ENCODE measurements at regions of chr11 and their contacts with region 1.

Region 1: GRCh38 chr11:17063171-17064002 is 14.1 kb downstream of the RPS13 start:
- DNase-seq: peak; percentile 35 to 70 (median 63)
- H3K4me3 ChIP-seq: no peak overlapping the region
- H3K27ac ChIP-seq: no peak overlapping the region
- H3K4me1 ChIP-seq: no peaks in the 10 kb centered on the region
- H3K27me3 ChIP-seq: no peaks in the 10 kb centered on the region
- CTCF ChIP-seq: peak in 2 of 3 donors; percentile 39 to 40
- EP300 ChIP-seq: no peak
- POLR2A ChIP-seq: no peak

Region 2: DNA sequence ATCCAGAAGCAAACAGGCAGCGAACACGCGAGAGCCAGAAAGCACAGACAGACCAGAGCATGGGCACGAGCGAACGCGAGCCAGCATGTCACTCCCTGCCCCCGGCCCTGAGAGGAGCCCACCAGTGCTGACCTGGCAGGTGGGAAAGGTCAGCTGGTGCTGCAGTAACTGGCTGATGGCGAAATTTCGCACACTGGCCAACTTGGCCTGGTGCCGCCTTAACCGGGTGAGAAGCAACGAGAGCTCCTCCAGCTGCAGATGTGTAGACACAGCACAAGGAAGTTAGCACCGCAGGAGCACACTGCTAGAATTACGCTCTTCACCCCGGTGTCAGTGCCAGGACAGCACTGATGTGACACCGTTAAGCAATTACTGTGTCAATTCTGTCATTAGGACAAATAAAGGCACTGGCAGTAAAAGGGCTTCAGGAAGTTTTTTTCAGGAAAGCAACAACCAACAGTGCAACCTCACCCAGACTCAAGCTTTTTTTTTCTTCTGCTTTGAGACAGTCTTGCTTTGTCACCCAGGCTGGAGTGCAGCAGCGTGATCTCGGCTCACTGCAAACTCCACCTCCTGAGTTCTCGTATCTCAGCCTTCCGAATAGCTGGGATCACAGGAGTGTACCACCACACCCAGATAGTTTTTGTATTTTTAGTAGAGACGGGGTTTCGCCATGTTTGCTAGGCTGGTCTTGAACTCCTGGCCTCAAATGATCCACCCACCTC is 248.2 kb before region 1 on chr11:
- intact Hi-C with region 1: loop called in 1 of 4 experiments (anchors 5 kb)
- DNase-seq: peak; percentile 42 to 57 (median 46)
- H3K4me3 ChIP-seq: no peak overlapping the region
- H3K27ac ChIP-seq: no peak overlapping the region
- H3K4me1 ChIP-seq: no peaks in the 10 kb centered on the region
- H3K27me3 ChIP-seq: no peaks in the 10 kb centered on the region
- CTCF ChIP-seq: no peak
- EP300 ChIP-seq: no peak
- POLR2A ChIP-seq: no peak

Region 3: GRCh38 chr11:16945671-16946469 is 117.5 kb before region 1 on chr11:
- intact Hi-C with region 1: loop called in 2 of 4 experiments (anchors 5 to 10 kb)
- DNase-seq: peak; percentile 48 to 70 (median 55)
- H3K4me3 ChIP-seq: no peak overlapping the region
- H3K27ac ChIP-seq: no peak overlapping the region
- H3K4me1 ChIP-seq: no peaks in the 10 kb centered on the region
- H3K27me3 ChIP-seq: no peaks in the 10 kb centered on the region
- CTCF ChIP-seq: peak; percentile 39 to 49 (median 47)
- EP300 ChIP-seq: no peak
- POLR2A ChIP-seq: no peak

Region 4: DNA sequence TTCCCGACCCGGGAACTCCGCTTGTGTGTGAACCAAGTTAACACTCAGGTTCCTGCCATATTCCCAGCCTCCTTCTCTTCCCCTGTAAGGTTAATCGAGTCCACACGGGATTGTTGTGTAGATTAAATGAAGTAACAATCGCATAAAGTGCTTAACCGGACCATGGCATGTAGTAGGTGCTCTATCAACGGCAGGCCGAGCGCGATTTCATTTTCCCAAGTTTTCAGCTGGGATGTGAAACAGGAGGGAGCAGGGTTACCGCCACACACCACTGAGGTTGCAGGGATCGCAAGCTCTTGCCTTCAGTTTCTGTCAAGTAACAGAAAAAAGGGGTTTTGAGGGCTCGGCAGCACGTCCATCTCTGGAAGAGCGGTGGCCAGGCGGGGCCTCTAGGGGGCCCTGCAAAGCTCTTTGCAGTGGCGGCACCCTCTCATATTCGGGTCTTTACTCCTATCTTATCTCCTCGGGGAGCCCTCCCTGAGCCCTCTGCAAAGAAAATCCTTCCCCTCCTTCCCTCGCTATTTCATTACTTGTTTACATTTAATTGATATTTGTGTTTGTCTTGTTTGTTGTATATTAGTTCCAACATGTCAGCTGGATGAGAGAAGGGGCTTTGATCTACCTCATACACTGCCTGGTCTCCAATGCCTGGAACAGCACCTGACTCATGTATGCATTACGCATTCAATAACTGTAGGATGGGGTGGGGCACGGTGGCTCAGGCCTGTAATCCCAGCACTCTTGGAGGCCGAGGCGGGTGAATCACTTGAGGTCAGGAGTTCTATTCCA is 48.4 kb before region 1 on chr11:
- intact Hi-C with region 1: loop called in 1 of 4 experiments (anchors 10 kb)
- DNase-seq: no peak
- H3K4me3 ChIP-seq: peak overlapping the region; percentile 56
- H3K27ac ChIP-seq: no peak overlapping the region
- H3K4me1 ChIP-seq: peaks cover 2% of the 10 kb centered on the region
- H3K27me3 ChIP-seq: no peaks in the 10 kb centered on the region
- CTCF ChIP-seq: no peak
- EP300 ChIP-seq: no peak
- POLR2A ChIP-seq: no peak

Region 5: GRCh38 chr11:17171916-17172315 is 108.5 kb after region 1 on chr11:
- intact Hi-C with region 1: no loop called
- DNase-seq: no peak
- H3K4me3 ChIP-seq: no peak overlapping the region
- H3K27ac ChIP-seq: no peak overlapping the region
- H3K4me1 ChIP-seq: peaks cover 1% of the 10 kb centered on the region
- H3K27me3 ChIP-seq: no peaks in the 10 kb centered on the region
- CTCF ChIP-seq: no peak
- EP300 ChIP-seq: no peak
- POLR2A ChIP-seq: no peak